ENCODE measurements at regions of chr13 and their contacts with region 1.

Region 1: DNA sequence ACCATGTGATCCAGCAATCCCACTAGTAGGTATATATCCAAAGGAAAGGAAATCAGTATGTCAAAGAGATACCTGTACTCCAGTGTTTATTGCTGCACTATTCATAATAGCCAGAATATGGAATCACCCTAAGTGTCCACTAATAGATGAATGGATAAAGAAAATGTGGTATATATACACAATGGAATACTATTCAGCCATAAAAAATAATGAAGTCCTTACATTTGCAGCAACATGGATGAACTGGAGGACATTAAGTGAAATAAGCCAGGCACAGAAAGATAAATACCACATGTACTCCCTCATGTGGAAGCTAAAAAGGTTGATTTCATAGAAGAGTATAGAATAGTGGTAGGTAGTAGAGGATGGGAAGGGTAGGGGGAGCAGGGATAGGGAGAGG is 23.5 kb downstream of the BORA start:
- DNase-seq: no peak
- ATAC-seq: no peak
- H3K4me3 ChIP-seq: no peak overlapping the region
- H3K4me3 Mint-ChIP-seq: no peak overlapping the region
- H3K27ac ChIP-seq: no peak overlapping the region
- H3K27ac Mint-ChIP-seq: no peak overlapping the region
- H3K4me1 ChIP-seq: no peaks in the 10 kb centered on the region
- H3K4me1 Mint-ChIP-seq: peaks cover 0 to 47% (median 13%) of the 10 kb centered on the region in 7 donors
- H3K27me3 ChIP-seq: no peaks in the 10 kb centered on the region
- H3K27me3 Mint-ChIP-seq: no peaks in the 10 kb centered on the region

Region 2: GRCh38 chr13:72763411-72763810 is 12.2 kb after region 1 on chr13:
- CTCF ChIA-PET with region 1: no interaction called
- POLR2A ChIA-PET with region 1: no interaction called
- intact Hi-C with region 1: loop called in 1 of 2 experiments (anchors 2 kb)
- DNase-seq: no peak
- ATAC-seq: no peak
- H3K4me3 ChIP-seq: no peak overlapping the region
- H3K4me3 Mint-ChIP-seq: no peak overlapping the region
- H3K27ac ChIP-seq: no peak overlapping the region
- H3K27ac Mint-ChIP-seq: no peak overlapping the region
- H3K4me1 ChIP-seq: no peaks in the 10 kb centered on the region
- H3K4me1 Mint-ChIP-seq: peaks cover 0 to 5% (median 0%) of the 10 kb centered on the region in 7 donors
- H3K27me3 ChIP-seq: no peaks in the 10 kb centered on the region
- H3K27me3 Mint-ChIP-seq: no peaks in the 10 kb centered on the region

Region 3: GRCh38 chr13:73074036-73074435 is 322.8 kb after region 1 on chr13:
- CTCF ChIA-PET with region 1: no interaction called
- POLR2A ChIA-PET with region 1: no interaction called
- intact Hi-C with region 1: no loop called
- DNase-seq: no peak
- ATAC-seq: peak; percentile 16
- H3K4me3 ChIP-seq: no peak overlapping the region
- H3K4me3 Mint-ChIP-seq: no peak overlapping the region
- H3K27ac ChIP-seq: no peak overlapping the region
- H3K27ac Mint-ChIP-seq: no peak overlapping the region
- H3K4me1 ChIP-seq: no peaks in the 10 kb centered on the region
- H3K4me1 Mint-ChIP-seq: peaks cover 0 to 15% (median 5%) of the 10 kb centered on the region in 7 donors
- H3K27me3 ChIP-seq: no peaks in the 10 kb centered on the region
- H3K27me3 Mint-ChIP-seq: peaks cover 0 to 3% (median 0%) of the 10 kb centered on the region in 5 donors

Region 4: GRCh38 chr13:73200406-73200805 is 449.2 kb after region 1 on chr13:
- CTCF ChIA-PET with region 1: no interaction called
- POLR2A ChIA-PET with region 1: no interaction called
- intact Hi-C with region 1: no loop called
- DNase-seq: no peak
- ATAC-seq: no peak
- H3K4me3 ChIP-seq: no peak overlapping the region
- H3K4me3 Mint-ChIP-seq: no peak overlapping the region
- H3K27ac ChIP-seq: no peak overlapping the region
- H3K27ac Mint-ChIP-seq: no peak overlapping the region
- H3K4me1 ChIP-seq: no peaks in the 10 kb centered on the region
- H3K4me1 Mint-ChIP-seq: no peaks in the 10 kb centered on the region
- H3K27me3 ChIP-seq: no peaks in the 10 kb centered on the region
- H3K27me3 Mint-ChIP-seq: peaks cover 8 to 28% (median 13%) of the 10 kb centered on the region in 5 donors

Measured in naive thymus-derived CD4-positive, alpha-beta T cell (primary cell).